Endothelial cell of umbilical vein (primary cell): ENCODE measurements at regions of chr9 and their contacts with region 1.

Region 1: GRCh38 chr9:18442629-18443491 is 31.1 kb upstream of the ADAMTSL1 start:
- DNase-seq: peak; percentile 87
- H3K4me3 ChIP-seq: no peak overlapping the region
- H3K27ac ChIP-seq: no peak overlapping the region
- H3K4me1 ChIP-seq: peaks cover 24% of the 10 kb centered on the region
- H3K27me3 ChIP-seq: no peaks in the 10 kb centered on the region
- CTCF ChIP-seq: peak; percentile 87 to 97
- POLR2A ChIP-seq: no peak

Region 2: DNA sequence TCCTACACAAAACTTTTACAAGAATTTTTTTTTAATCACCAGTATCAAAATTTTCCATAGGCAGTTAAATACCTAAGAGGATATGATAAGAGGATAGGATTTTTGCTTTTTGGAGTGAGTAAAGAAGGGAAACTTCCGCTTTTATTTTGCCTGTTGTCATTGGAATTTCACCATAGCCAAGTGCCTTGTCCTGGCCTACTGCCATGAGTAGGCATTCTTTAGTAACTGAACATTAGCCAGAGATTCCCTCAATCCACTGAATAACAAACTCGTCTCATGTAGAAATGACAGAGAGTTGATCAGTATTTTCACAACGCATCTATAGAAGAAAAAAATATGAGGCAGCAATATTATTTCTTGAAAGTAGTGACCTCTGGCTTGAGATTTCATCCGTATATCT is 258.5 kb before region 1 on chr9:
- CTCF ChIA-PET with region 1: no interaction called
- POLR2A ChIA-PET with region 1: no interaction called
- dilution Hi-C with region 1: no loop called
- intact Hi-C with region 1: no loop called
- DNase-seq: peak; percentile 19
- H3K4me3 ChIP-seq: no peak overlapping the region
- H3K27ac ChIP-seq: no peak overlapping the region
- H3K4me1 ChIP-seq: no peaks in the 10 kb centered on the region
- H3K27me3 ChIP-seq: no peaks in the 10 kb centered on the region
- CTCF ChIP-seq: no peak
- POLR2A ChIP-seq: no peak

Region 3: GRCh38 chr9:18238254-18238653 is 204.6 kb before region 1 on chr9:
- CTCF ChIA-PET with region 1: interaction called, 7 read pairs
- POLR2A ChIA-PET with region 1: no interaction called
- dilution Hi-C with region 1: no loop called
- intact Hi-C with region 1: loop called (anchors 1 kb)
- DNase-seq: peak; percentile 97
- H3K4me3 ChIP-seq: peak overlapping the region in 1 of 3 experiments; percentile 27
- H3K27ac ChIP-seq: peak overlapping the region; percentile 93
- H3K4me1 ChIP-seq: peaks cover 43% of the 10 kb centered on the region
- H3K27me3 ChIP-seq: no peaks in the 10 kb centered on the region
- CTCF ChIP-seq: no peak
- POLR2A ChIP-seq: no peak

Region 4: DNA sequence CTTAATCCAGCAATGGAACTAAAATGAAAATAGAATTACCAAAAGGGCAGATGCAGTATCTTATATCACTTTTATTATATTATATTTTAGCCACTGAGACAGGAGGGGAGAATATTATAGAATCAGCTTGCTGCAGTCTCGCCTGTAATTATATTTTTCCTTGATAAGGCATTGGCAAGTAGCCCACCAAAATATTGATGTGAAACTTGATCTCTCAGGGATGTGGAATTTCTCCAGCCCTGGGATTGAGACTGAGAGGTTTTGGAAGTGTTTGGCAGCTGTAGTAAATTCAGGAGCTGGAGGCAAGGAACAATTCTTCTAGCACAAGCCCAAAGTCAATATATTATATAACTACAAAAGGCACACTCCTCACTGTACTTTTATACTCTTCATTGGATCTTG is 111.1 kb before region 1 on chr9:
- CTCF ChIA-PET with region 1: interaction called, 13 read pairs
- POLR2A ChIA-PET with region 1: interaction called, 4 read pairs
- dilution Hi-C with region 1: no loop called
- intact Hi-C with region 1: loop called (anchors 1 kb)
- DNase-seq: peak; percentile 99
- H3K4me3 ChIP-seq: no peak overlapping the region
- H3K27ac ChIP-seq: peak overlapping the region; percentile 85
- H3K4me1 ChIP-seq: peaks cover 40% of the 10 kb centered on the region
- H3K27me3 ChIP-seq: no peaks in the 10 kb centered on the region
- CTCF ChIP-seq: no peak
- POLR2A ChIP-seq: peak; percentile 57

Region 5: GRCh38 chr9:18459958-18460584 is 17.2 kb after region 1 on chr9:
- CTCF ChIA-PET with region 1: interaction called, 110 read pairs
- POLR2A ChIA-PET with region 1: no interaction called
- dilution Hi-C with region 1: no loop called
- intact Hi-C with region 1: no loop called
- DNase-seq: peak; percentile 85
- H3K4me3 ChIP-seq: no peak overlapping the region
- H3K27ac ChIP-seq: peak overlapping the region; percentile 91
- H3K4me1 ChIP-seq: peaks cover 29% of the 10 kb centered on the region
- H3K27me3 ChIP-seq: no peaks in the 10 kb centered on the region
- CTCF ChIP-seq: no peak
- POLR2A ChIP-seq: peak; percentile 55

Region 6: GRCh38 chr9:18499062-18499461 is 56.2 kb after region 1 on chr9:
- CTCF ChIA-PET with region 1: interaction called, 10 read pairs
- POLR2A ChIA-PET with region 1: no interaction called
- dilution Hi-C with region 1: no loop called
- intact Hi-C with region 1: no loop called
- DNase-seq: no peak
- H3K4me3 ChIP-seq: no peak overlapping the region
- H3K27ac ChIP-seq: no peak overlapping the region
- H3K4me1 ChIP-seq: no peaks in the 10 kb centered on the region
- H3K27me3 ChIP-seq: no peaks in the 10 kb centered on the region
- CTCF ChIP-seq: no peak
- POLR2A ChIP-seq: no peak

Region 7: DNA sequence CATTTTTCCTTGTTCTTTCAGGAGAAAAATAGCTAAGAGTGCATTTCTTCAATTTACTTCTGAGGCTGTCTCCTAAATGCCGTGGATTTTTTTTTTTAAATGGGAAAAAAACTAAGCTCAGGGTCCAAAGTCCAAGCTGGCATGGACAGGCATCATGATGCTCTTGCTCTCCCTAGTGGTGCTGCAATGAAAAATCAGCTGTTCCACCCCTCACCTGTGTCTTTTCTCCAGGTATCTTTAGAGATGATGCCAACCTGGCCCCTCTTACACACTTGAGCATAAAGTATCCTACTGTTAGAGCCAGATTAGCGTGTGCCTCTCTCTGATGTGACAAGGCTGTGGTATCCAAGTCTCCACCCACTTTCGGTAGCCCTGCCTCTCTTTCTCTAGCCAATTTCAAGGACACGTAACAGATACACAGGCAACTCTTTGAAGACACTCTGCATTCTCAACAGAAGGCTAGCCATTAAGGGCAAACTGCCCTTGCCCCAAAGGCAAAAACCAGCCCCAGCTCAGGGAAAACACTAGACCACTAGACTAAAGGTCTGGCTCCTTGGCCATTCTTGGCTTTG is 381.3 kb after region 1 on chr9:
- CTCF ChIA-PET with region 1: interaction called, 18 read pairs
- POLR2A ChIA-PET with region 1: no interaction called
- dilution Hi-C with region 1: no loop called
- intact Hi-C with region 1: no loop called
- DNase-seq: peak; percentile 31
- H3K4me3 ChIP-seq: no peak overlapping the region
- H3K27ac ChIP-seq: no peak overlapping the region
- H3K4me1 ChIP-seq: peaks cover 3% of the 10 kb centered on the region
- H3K27me3 ChIP-seq: no peaks in the 10 kb centered on the region
- CTCF ChIP-seq: peak in 1 of 2 donors; percentile 53
- POLR2A ChIP-seq: no peak

Region 8: GRCh38 chr9:19456996-19457692 is 1014.3 kb after region 1 on chr9:
- CTCF ChIA-PET with region 1: interaction called, 7 read pairs
- POLR2A ChIA-PET with region 1: no interaction called
- dilution Hi-C with region 1: no loop called
- intact Hi-C with region 1: loop called (anchors 2 kb)
- DNase-seq: peak; percentile 80
- H3K4me3 ChIP-seq: no peak overlapping the region
- H3K27ac ChIP-seq: no peak overlapping the region
- H3K4me1 ChIP-seq: peaks cover 6% of the 10 kb centered on the region
- H3K27me3 ChIP-seq: no peaks in the 10 kb centered on the region
- CTCF ChIP-seq: peak; percentile 88 to 93
- POLR2A ChIP-seq: no peak